Ovary (tissue), 10 donors: ENCODE measurements at regions of chr15 and their contacts with region 1.

Region 1: GRCh38 chr15:74781431-74782258 is at the start of gene CSK:
- DNase-seq: peak; percentile 69 to 87 (median 82)
- H3K4me3 ChIP-seq: peak within 1 kb of the TSS; percentile 54
- H3K27ac ChIP-seq: peak within 1 kb of the TSS; percentile 63 to 80
- H3K4me1 ChIP-seq: peaks cover 14% of the 10 kb centered on the region
- H3K27me3 ChIP-seq: no peaks in the 10 kb centered on the region
- CTCF ChIP-seq: peak in 1 of 3 donors; percentile 69
- EP300 ChIP-seq: no peak
- POLR2A ChIP-seq: peak; percentile 33
- total RNA-seq, gene CSK: 10.7 to 49.6 (median 42.1) TPM

Region 2: GRCh38 chr15:74835307-74835823 is 53.7 kb after region 1 on chr15:
- intact Hi-C with region 1: loop called in 2 of 4 experiments (anchors 5 kb)
- DNase-seq: peak in 2 of 5 donors; percentile 44 to 65
- H3K4me3 ChIP-seq: no peak overlapping the region
- H3K27ac ChIP-seq: no peak overlapping the region
- H3K4me1 ChIP-seq: no peaks in the 10 kb centered on the region
- H3K27me3 ChIP-seq: no peaks in the 10 kb centered on the region
- CTCF ChIP-seq: peak in 1 of 3 donors; percentile 12
- EP300 ChIP-seq: no peak
- POLR2A ChIP-seq: no peak

Region 3: DNA sequence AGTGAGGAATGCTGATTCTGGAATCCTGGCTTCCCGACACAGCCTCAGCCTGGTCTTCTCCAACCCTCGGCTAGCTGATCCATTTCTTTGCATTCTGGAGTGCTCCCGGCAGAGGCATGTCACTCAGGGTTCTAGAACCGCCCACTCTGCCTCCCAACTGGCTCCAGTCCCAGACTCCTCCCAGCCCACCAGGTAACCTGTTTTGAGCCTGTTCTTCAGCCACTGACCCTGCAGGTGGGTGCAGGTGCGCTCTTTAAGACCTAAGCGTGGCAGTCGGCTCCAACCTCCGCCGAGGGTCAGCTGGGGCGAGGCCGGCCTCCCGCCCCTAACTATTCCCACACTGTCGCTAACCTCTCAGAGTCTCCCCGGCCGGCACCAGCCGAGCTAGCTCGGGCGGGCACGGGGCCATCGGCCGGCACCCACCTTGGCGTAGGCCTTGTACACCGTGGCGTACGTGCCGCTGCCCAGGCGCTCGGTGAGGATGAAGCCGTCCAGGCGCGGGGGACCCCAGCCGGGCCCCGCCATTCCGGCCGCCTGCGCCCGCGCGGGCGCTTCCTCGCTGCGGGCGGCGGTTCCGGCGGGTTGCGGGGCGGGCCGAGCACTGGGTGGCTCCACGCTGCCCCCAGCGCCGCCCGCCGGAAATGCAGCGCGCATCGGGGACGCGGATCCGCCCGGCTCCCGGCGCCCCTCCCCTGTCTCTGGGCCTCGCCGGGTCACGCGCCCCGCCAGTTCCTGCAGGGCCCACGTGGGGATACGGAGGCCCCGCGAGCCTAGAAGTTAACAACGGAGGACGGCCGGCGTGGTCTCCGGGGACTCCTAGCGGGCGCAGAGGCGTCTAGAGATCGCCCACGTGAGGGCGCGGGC is 61.2 kb after region 1 on chr15 and contains the start of gene ULK3:
- intact Hi-C with region 1: loop called in 2 of 4 experiments (anchors 5 kb)
- DNase-seq: peak; percentile 91 to 95 (median 92)
- H3K4me3 ChIP-seq: peak within 1 kb of the TSS; percentile 57
- H3K27ac ChIP-seq: peak within 1 kb of the TSS; percentile 69 to 90
- H3K4me1 ChIP-seq: peaks cover 4% of the 10 kb centered on the region
- H3K27me3 ChIP-seq: no peaks in the 10 kb centered on the region
- CTCF ChIP-seq: peak; percentile 60 to 97 (median 96)
- EP300 ChIP-seq: no peak
- POLR2A ChIP-seq: peak; percentile 10
- total RNA-seq, gene ULK3: 25.2 to 45.7 (median 27.8) TPM

Region 4: GRCh38 chr15:74906446-74907162 is 125.0 kb after region 1 on chr15 and contains the start of gene FAM219B:
- intact Hi-C with region 1: loop called in 1 of 4 experiments (anchors 5 kb)
- DNase-seq: peak; percentile 90 to 94 (median 92)
- H3K4me3 ChIP-seq: peak within 1 kb of the TSS; percentile 76
- H3K27ac ChIP-seq: peak within 1 kb of the TSS; percentile 73 to 78
- H3K4me1 ChIP-seq: peaks cover 5% of the 10 kb centered on the region
- H3K27me3 ChIP-seq: no peaks in the 10 kb centered on the region
- CTCF ChIP-seq: no peak
- EP300 ChIP-seq: no peak
- POLR2A ChIP-seq: peak; percentile 93
- total RNA-seq, gene FAM219B: 31.0 to 125 (median 67.4) TPM

Region 5: GRCh38 chr15:74950078-74951000 is 168.7 kb after region 1 on chr15:
- intact Hi-C with region 1: loop called (anchors 5 kb)
- DNase-seq: peak; percentile 60 to 87 (median 74)
- H3K4me3 ChIP-seq: no peak overlapping the region
- H3K27ac ChIP-seq: no peak overlapping the region
- H3K4me1 ChIP-seq: peaks cover 2% of the 10 kb centered on the region
- H3K27me3 ChIP-seq: no peaks in the 10 kb centered on the region
- CTCF ChIP-seq: peak; percentile 93 to 98 (median 98)
- EP300 ChIP-seq: no peak
- POLR2A ChIP-seq: no peak

Region 6: GRCh38 chr15:74956648-74957300 is 175.1 kb after region 1 on chr15 and contains the start of gene RPP25:
- intact Hi-C with region 1: loop called in 3 of 4 experiments (anchors 5 kb)
- DNase-seq: peak; percentile 80 to 88 (median 86)
- H3K4me3 ChIP-seq: peak within 1 kb of the TSS; percentile 56
- H3K27ac ChIP-seq: peak within 1 kb of the TSS; percentile 50 to 89
- H3K4me1 ChIP-seq: peaks cover 3% of the 10 kb centered on the region
- H3K27me3 ChIP-seq: no peaks in the 10 kb centered on the region
- CTCF ChIP-seq: no peak
- EP300 ChIP-seq: no peak
- POLR2A ChIP-seq: peak; percentile 75
- total RNA-seq, gene RPP25: 13.6 to 41.2 (median 28.6) TPM

Region 7: DNA sequence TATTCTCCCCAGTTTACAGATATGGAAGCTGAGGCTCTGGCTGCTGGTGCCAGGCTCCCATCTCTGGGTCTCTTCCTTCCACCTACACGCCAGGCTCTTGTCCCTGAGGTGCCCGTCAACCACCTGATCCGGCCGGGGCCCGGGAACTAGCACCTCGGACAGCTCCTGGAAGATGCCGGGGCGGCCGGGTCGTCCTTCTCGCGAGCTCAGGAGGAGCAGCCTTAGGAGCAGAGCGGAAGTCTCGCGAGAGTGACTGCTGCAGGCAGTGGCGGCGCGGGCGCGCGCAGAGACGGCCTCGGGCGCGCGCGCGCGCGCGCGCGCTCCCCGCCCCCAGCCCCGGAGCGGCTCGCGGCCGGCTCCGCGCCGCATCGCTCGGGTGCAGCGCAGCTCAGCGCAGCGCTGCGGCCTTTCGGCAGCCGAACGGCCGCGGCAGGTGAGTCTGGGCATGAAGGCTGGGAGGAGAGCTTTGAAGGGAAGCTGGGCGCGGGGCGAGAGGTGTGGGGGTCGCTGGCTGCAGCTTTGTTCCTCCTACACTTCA is 213.7 kb after region 1 on chr15 and contains the start of gene SCAMP5:
- intact Hi-C with region 1: loop called in 1 of 4 experiments (anchors 10 kb)
- DNase-seq: peak; percentile 94 to 97 (median 94)
- H3K4me3 ChIP-seq: peak within 1 kb of the TSS; percentile 48
- H3K27ac ChIP-seq: no peak within 1 kb of the TSS
- H3K4me1 ChIP-seq: peaks cover 8% of the 10 kb centered on the region
- H3K27me3 ChIP-seq: no peaks in the 10 kb centered on the region
- CTCF ChIP-seq: no peak
- EP300 ChIP-seq: no peak
- POLR2A ChIP-seq: no peak
- total RNA-seq, gene SCAMP5: 2.6 to 10.1 (median 5.7) TPM